Activated CD4-positive, alpha-beta memory T cell treated with anti-CD3 and anti-CD28 coated beads for 36 hours (primary cell): ENCODE measurements at regions of chr4 and their contacts with region 1.

Region 1: GRCh38 chr4:112231779-112232713 is at the start of gene AP1AR:
- DNase-seq: peak; percentile 87
- H3K4me3 Mint-ChIP-seq: peak within 1 kb of the TSS; percentile 87
- H3K27ac Mint-ChIP-seq: peak within 1 kb of the TSS; percentile 98
- H3K4me1 Mint-ChIP-seq: peaks cover 34% of the 10 kb centered on the region
- H3K27me3 Mint-ChIP-seq: no peaks in the 10 kb centered on the region
- total RNA-seq, gene AP1AR: 15.4 to 19.1 TPM

Region 2: DNA sequence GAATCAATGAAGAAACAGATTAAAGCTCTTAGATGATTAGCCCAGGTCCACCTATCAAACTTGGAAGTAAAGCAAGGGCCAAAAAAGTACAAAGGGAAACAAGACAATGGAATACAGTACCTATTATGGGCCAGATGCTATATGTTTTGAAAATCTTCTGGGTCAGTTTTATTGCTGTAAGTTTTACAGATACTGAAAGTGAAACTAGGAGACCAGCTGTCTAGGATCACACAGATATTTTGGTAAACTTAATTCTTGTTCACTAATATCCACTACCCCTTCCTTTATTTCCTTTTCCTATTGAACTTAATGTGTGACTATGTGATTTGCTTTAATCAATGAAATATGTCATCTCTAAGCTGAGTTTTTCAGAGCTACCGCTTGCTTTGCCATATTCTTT is 1103.7 kb before region 1 on chr4:
- CTCF ChIA-PET with region 1: no interaction called
- POLR2A ChIA-PET with region 1: no interaction called
- intact Hi-C with region 1: no loop called
- DNase-seq: no peak
- H3K4me3 Mint-ChIP-seq: no peak overlapping the region
- H3K27ac Mint-ChIP-seq: no peak overlapping the region
- H3K4me1 Mint-ChIP-seq: peaks cover 4% of the 10 kb centered on the region
- H3K27me3 Mint-ChIP-seq: no peaks in the 10 kb centered on the region

Region 3: GRCh38 chr4:112075129-112075753 is 156.8 kb before region 1 on chr4:
- CTCF ChIA-PET with region 1: interaction called, 4 read pairs
- POLR2A ChIA-PET with region 1: no interaction called
- intact Hi-C with region 1: loop called (anchors 2 kb)
- DNase-seq: peak; percentile 30
- H3K4me3 Mint-ChIP-seq: no peak overlapping the region
- H3K27ac Mint-ChIP-seq: no peak overlapping the region
- H3K4me1 Mint-ChIP-seq: no peaks in the 10 kb centered on the region
- H3K27me3 Mint-ChIP-seq: peaks cover 11% of the 10 kb centered on the region

Region 4: DNA sequence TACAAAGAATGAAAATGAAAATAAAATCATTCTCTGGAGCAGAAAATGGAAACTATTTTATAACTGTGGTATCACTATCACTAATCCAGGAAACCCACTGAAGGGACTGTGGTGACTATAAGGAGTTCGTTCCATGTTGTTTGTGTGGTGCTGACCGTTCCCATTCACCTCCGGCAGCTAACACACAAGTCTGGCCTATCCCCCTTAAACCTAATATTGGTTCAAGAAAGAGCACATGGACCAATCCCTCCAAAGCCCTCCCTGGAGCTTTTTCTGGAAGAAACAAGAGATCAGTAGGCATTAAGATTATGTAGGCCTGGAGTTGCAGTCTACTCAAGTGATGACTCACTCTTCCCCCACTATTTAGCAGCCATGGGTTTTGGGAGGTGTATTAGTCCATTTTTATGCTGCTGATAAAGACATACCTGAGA is 112.7 kb before region 1 on chr4:
- CTCF ChIA-PET with region 1: interaction called, 4 read pairs
- POLR2A ChIA-PET with region 1: no interaction called
- intact Hi-C with region 1: loop called (anchors 1 kb)
- DNase-seq: peak; percentile 35
- H3K4me3 Mint-ChIP-seq: no peak overlapping the region
- H3K27ac Mint-ChIP-seq: peak overlapping the region; percentile 81
- H3K4me1 Mint-ChIP-seq: peaks cover 12% of the 10 kb centered on the region
- H3K27me3 Mint-ChIP-seq: peaks cover 2% of the 10 kb centered on the region

Region 5: DNA sequence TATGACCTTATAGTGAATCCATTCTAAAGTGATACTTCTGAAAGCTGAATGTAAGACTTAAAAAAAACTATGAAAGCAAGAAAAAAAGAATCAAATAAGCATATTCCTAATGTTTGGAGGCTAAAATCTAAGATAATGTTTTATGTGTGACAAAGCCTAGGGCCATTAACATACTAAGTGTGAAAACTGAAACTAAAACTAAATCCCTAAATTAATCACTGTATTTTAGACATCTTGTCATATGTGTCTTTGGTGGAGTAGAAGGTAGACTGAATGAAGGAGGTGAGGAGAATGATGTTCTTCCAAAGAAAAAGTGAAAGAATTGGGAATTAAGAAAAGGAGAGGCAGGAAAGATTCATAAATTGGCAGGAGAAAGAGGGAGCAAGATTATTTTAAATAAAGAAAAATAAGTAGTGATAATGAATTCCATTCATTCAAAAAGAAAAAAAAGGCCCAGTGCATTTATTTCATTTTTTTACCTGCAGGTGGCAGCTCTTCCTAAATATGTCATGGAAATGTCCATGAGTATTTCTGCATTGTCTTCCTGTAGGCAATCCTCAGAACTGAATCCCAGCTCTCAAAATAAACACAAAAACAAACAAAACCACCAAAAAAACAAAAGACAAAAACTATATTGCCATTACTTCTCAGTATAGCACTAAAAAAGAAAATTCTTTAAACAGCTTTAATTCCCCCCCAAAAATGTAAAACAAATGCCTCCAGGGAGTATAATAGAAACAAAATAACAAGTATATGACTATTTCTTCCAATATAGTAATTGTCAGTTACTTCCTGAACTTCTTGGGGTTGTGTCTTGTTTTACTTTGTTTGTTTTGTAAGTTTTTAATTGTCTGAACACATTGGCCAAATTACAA is 17.4 kb before region 1 on chr4:
- CTCF ChIA-PET with region 1: interaction called, 17 read pairs
- POLR2A ChIA-PET with region 1: no interaction called
- intact Hi-C with region 1: loop called (anchors 1 kb)
- DNase-seq: no peak
- H3K4me3 Mint-ChIP-seq: no peak overlapping the region
- H3K27ac Mint-ChIP-seq: no peak overlapping the region
- H3K4me1 Mint-ChIP-seq: peaks cover 8% of the 10 kb centered on the region
- H3K27me3 Mint-ChIP-seq: no peaks in the 10 kb centered on the region

Region 6: GRCh38 chr4:112515304-112516067 is 283.4 kb after region 1 on chr4:
- CTCF ChIA-PET with region 1: interaction called, 8 read pairs
- POLR2A ChIA-PET with region 1: no interaction called
- intact Hi-C with region 1: loop called (anchors 2 kb)
- DNase-seq: peak; percentile 67
- H3K4me3 Mint-ChIP-seq: peak overlapping the region; percentile 94
- H3K27ac Mint-ChIP-seq: no peak overlapping the region
- H3K4me1 Mint-ChIP-seq: peaks cover 42% of the 10 kb centered on the region
- H3K27me3 Mint-ChIP-seq: peaks cover 85% of the 10 kb centered on the region